Endothelial cell of umbilical vein (primary cell): ENCODE measurements at regions of chr11 and their contacts with region 1.

Region 1: GRCh38 chr11:60899046-60899936 is 7.1 kb downstream of the PRPF19 start:
- DNase-seq: peak; percentile 81
- H3K4me3 ChIP-seq: no peak overlapping the region
- H3K27ac ChIP-seq: peak overlapping the region; percentile 1
- H3K4me1 ChIP-seq: peaks cover 2% of the 10 kb centered on the region
- H3K27me3 ChIP-seq: no peaks in the 10 kb centered on the region
- CTCF ChIP-seq: peak; percentile 85 to 94
- POLR2A ChIP-seq: no peak

Region 2: DNA sequence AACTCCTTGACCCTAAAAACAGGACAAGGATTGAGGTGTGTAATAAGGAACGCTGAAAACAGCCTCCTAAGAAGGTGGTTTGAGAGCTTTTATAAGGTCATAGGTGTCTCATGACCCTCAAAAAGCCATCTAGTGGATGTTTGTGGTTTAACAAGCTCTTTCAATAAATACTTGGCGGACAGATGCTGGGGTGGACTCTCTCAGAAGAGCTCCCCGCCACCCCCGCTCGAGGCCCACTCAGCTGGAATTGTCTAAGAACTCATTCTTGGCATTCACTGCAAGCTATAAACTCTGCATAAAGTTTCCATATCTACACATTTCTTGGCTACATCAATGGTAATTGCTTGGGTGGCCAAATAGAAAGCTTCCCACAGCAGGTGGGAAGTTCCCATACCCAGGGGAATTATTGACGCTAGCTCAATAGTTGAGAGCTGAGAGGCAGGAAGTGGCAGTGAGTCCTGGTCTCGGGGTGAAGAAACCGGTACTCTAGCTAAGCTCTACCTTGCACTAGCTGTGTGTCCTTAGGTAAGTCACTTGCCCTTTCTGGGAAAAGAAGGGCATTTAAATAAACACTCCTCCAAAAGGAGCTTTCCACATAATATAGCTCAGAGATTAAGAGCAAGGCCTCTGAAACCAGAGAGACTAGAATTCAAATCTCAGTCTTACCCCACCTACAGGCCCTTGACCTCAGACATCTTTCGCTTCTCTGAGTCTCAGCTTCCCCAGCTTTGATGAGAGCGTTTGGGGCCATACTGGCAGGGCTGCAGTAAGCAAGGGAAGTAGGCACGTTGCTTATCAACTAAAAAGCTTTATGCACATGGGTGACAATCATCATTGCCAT is 136.2 kb before region 1 on chr11:
- CTCF ChIA-PET with region 1: interaction called, 10 read pairs
- POLR2A ChIA-PET with region 1: no interaction called
- dilution Hi-C with region 1: no loop called
- intact Hi-C with region 1: no loop called
- DNase-seq: no peak
- H3K4me3 ChIP-seq: no peak overlapping the region
- H3K27ac ChIP-seq: no peak overlapping the region
- H3K4me1 ChIP-seq: no peaks in the 10 kb centered on the region
- H3K27me3 ChIP-seq: peaks cover 12 to 24% of the 10 kb centered on the region in 2 experiments
- CTCF ChIP-seq: peak; percentile 6 to 17
- POLR2A ChIP-seq: no peak

Region 3: GRCh38 chr11:60841797-60842667 is 57.3 kb before region 1 on chr11 and contains the start of gene CCDC86:
- CTCF ChIA-PET with region 1: interaction called, 15 read pairs
- POLR2A ChIA-PET with region 1: interaction called, 8 read pairs
- dilution Hi-C with region 1: no loop called
- intact Hi-C with region 1: no loop called
- DNase-seq: peak; percentile 96
- H3K4me3 ChIP-seq: peak within 1 kb of the TSS; percentile 64 to 74 (median 73)
- H3K27ac ChIP-seq: peak within 1 kb of the TSS; percentile 65
- H3K4me1 ChIP-seq: peaks cover 37% of the 10 kb centered on the region
- H3K27me3 ChIP-seq: no peaks in the 10 kb centered on the region
- CTCF ChIP-seq: no peak
- POLR2A ChIP-seq: peak; percentile 59
- total RNA-seq, gene CCDC86: 57.6 and 60.8 TPM in 2 replicates

Region 4: GRCh38 chr11:60872961-60873524 is 26.2 kb before region 1 on chr11:
- CTCF ChIA-PET with region 1: interaction called, 10 read pairs
- POLR2A ChIA-PET with region 1: no interaction called
- dilution Hi-C with region 1: no loop called
- intact Hi-C with region 1: no loop called
- DNase-seq: no peak
- H3K4me3 ChIP-seq: no peak overlapping the region
- H3K27ac ChIP-seq: no peak overlapping the region
- H3K4me1 ChIP-seq: no peaks in the 10 kb centered on the region
- H3K27me3 ChIP-seq: no peaks in the 10 kb centered on the region
- CTCF ChIP-seq: no peak
- POLR2A ChIP-seq: no peak

Region 5: GRCh38 chr11:60913793-60914632 is 14.7 kb after region 1 on chr11 and contains the start of gene TMEM109:
- CTCF ChIA-PET with region 1: interaction called, 32 read pairs
- POLR2A ChIA-PET with region 1: interaction called, 4 read pairs
- dilution Hi-C with region 1: no loop called
- intact Hi-C with region 1: no loop called
- DNase-seq: peak; percentile 98
- H3K4me3 ChIP-seq: peak within 1 kb of the TSS; percentile 43 to 79 (median 76)
- H3K27ac ChIP-seq: peak within 1 kb of the TSS; percentile 65
- H3K4me1 ChIP-seq: peaks cover 36% of the 10 kb centered on the region
- H3K27me3 ChIP-seq: peaks cover 0 to 2% of the 10 kb centered on the region in 2 experiments
- CTCF ChIP-seq: no peak
- POLR2A ChIP-seq: no peak
- total RNA-seq, gene TMEM109: 172 and 192 TPM in 2 replicates

Region 6: GRCh38 chr11:60953771-60954170 is 54.5 kb after region 1 on chr11:
- CTCF ChIA-PET with region 1: no interaction called
- POLR2A ChIA-PET with region 1: no interaction called
- dilution Hi-C with region 1: no loop called
- intact Hi-C with region 1: no loop called
- DNase-seq: peak; percentile 29
- H3K4me3 ChIP-seq: no peak overlapping the region
- H3K27ac ChIP-seq: no peak overlapping the region
- H3K4me1 ChIP-seq: peaks cover 10% of the 10 kb centered on the region
- H3K27me3 ChIP-seq: peaks cover 2 to 13% of the 10 kb centered on the region in 2 experiments
- CTCF ChIP-seq: no peak
- POLR2A ChIP-seq: no peak